ENCODE measurements at regions of chr5 and their contacts with region 1.

Region 1: GRCh38 chr5:160439205-160439600 is 17.5 kb downstream of the PTTG1 start:
- DNase-seq: peak; percentile 94
- H3K4me3 Mint-ChIP-seq: peak overlapping the region; percentile 84
- H3K27ac Mint-ChIP-seq: peak overlapping the region; percentile 94
- H3K4me1 Mint-ChIP-seq: peaks cover 17% of the 10 kb centered on the region
- H3K27me3 Mint-ChIP-seq: peaks cover 2% of the 10 kb centered on the region

Region 2: GRCh38 chr5:160293901-160294561 is 145.2 kb before region 1 on chr5:
- CTCF ChIA-PET with region 1: no interaction called
- intact Hi-C with region 1: no loop called
- DNase-seq: no peak
- H3K4me3 Mint-ChIP-seq: no peak overlapping the region
- H3K27ac Mint-ChIP-seq: no peak overlapping the region
- H3K4me1 Mint-ChIP-seq: no peaks in the 10 kb centered on the region
- H3K27me3 Mint-ChIP-seq: no peaks in the 10 kb centered on the region

Region 3: DNA sequence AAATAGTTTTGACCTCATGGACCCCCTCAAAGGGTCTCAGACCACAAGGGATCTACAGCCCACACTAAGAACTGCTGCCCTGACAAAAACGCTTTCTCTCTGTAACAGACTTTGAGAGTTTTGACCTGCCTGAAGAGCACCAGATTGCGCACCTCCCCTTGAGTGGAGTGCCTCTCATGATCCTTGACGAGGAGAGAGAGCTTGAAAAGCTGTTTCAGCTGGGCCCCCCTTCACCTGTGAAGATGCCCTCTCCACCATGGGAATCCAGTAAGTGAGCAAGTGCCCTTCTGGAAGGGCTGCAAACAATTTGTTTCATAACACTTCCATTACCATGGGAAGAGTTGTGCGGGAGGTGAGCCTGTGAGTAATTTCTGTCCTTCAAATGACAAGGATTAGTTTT is 11.6 kb before region 1 on chr5:
- CTCF ChIA-PET with region 1: interaction called, 61 read pairs
- intact Hi-C with region 1: no loop called
- DNase-seq: no peak
- H3K4me3 Mint-ChIP-seq: no peak overlapping the region
- H3K27ac Mint-ChIP-seq: no peak overlapping the region
- H3K4me1 Mint-ChIP-seq: peaks cover 23% of the 10 kb centered on the region
- H3K27me3 Mint-ChIP-seq: no peaks in the 10 kb centered on the region

Region 4: DNA sequence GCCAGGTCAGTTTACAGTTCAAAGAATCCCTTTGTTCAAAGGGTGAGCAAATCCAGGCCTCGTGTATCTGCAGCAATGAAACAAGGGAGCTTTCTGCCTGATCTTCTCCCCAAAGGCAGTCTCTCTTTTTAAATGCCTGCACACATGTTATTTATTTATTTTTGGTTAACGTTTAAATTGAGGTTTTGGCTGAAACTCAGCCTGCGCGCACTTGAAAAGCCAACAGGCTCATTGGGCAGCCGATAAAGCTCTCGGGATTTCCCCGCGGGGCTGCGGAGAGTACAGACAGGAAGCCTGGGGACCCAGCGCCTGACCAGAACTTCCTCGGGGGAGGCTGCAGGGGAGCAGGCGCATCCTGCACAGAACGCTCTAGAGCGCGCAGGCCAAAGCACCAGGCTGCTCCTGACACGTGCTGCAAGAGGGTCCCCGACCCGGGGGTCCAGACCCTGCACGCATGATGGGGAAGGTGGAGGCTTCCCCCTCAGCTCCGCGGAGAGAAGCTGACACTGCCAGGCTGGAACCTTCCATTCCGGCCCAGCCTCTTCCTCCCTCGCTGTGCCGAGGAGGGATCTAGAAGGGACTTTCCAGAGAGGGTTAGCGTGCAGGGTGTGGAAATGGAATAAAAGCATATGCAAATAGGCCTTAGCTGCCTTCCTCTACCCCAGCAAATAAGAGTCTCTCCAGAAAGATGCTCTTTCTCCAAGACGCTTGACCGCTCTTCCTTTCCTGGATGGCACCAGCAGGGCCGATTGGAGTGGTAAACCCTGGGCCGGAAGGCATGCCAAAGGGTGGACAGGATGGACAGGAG is 28.6 kb after region 1 on chr5:
- CTCF ChIA-PET with region 1: interaction called, 74 read pairs
- intact Hi-C with region 1: loop called (anchors 1 kb)
- DNase-seq: peak; percentile 87
- H3K4me3 Mint-ChIP-seq: peak overlapping the region; percentile 99
- H3K27ac Mint-ChIP-seq: peak overlapping the region; percentile 98
- H3K4me1 Mint-ChIP-seq: peaks cover 72% of the 10 kb centered on the region
- H3K27me3 Mint-ChIP-seq: no peaks in the 10 kb centered on the region

Region 5: GRCh38 chr5:160508780-160509361 is 69.7 kb after region 1 on chr5:
- CTCF ChIA-PET with region 1: interaction called, 125 read pairs
- intact Hi-C with region 1: loop called (anchors 1 kb)
- DNase-seq: peak; percentile 78
- H3K4me3 Mint-ChIP-seq: no peak overlapping the region
- H3K27ac Mint-ChIP-seq: no peak overlapping the region
- H3K4me1 Mint-ChIP-seq: peaks cover 30% of the 10 kb centered on the region
- H3K27me3 Mint-ChIP-seq: no peaks in the 10 kb centered on the region

Region 6: DNA sequence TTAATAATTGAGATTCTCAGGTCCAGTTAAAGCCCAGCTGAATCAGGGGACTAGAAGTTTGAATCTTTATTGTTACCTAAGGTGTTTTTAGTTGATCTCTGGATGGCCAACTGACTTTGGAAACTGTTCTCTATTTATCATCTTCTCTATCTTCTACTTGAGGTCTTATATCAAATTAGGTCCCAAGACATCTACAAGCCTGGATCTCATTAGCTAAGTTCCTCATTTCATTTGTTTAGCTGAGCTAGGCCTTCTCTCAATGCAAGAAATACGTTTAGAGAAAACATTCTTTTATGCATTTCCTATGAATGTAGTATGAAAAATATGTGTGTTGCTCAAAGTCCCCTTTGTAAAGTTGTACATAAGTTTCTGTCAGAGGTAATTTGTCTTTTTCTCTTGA is 179.1 kb after region 1 on chr5:
- CTCF ChIA-PET with region 1: no interaction called
- intact Hi-C with region 1: no loop called
- DNase-seq: no peak
- H3K4me3 Mint-ChIP-seq: no peak overlapping the region
- H3K27ac Mint-ChIP-seq: no peak overlapping the region
- H3K4me1 Mint-ChIP-seq: no peaks in the 10 kb centered on the region
- H3K27me3 Mint-ChIP-seq: peaks cover 9% of the 10 kb centered on the region

Region 7: GRCh38 chr5:160685695-160686094 is 246.5 kb after region 1 on chr5:
- CTCF ChIA-PET with region 1: no interaction called
- intact Hi-C with region 1: loop called (anchors 10 kb)
- DNase-seq: no peak
- H3K4me3 Mint-ChIP-seq: no peak overlapping the region
- H3K27ac Mint-ChIP-seq: no peak overlapping the region
- H3K4me1 Mint-ChIP-seq: no peaks in the 10 kb centered on the region
- H3K27me3 Mint-ChIP-seq: peaks cover 6% of the 10 kb centered on the region

Region 8: GRCh38 chr5:160843240-160843639 is 404.0 kb after region 1 on chr5:
- CTCF ChIA-PET with region 1: no interaction called
- intact Hi-C with region 1: loop called (anchors 10 kb)
- DNase-seq: no peak
- H3K4me3 Mint-ChIP-seq: no peak overlapping the region
- H3K27ac Mint-ChIP-seq: no peak overlapping the region
- H3K4me1 Mint-ChIP-seq: no peaks in the 10 kb centered on the region
- H3K27me3 Mint-ChIP-seq: peaks cover 2% of the 10 kb centered on the region

Region 9: GRCh38 chr5:161535762-161536161 is 1096.6 kb after region 1 on chr5:
- CTCF ChIA-PET with region 1: no interaction called
- intact Hi-C with region 1: loop called (anchors 5 kb)
- DNase-seq: no peak
- H3K4me3 Mint-ChIP-seq: no peak overlapping the region
- H3K27ac Mint-ChIP-seq: no peak overlapping the region
- H3K4me1 Mint-ChIP-seq: no peaks in the 10 kb centered on the region
- H3K27me3 Mint-ChIP-seq: no peaks in the 10 kb centered on the region

Measured in activated naive CD4-positive, alpha-beta T cell treated with anti-CD3 and anti-CD28 coated beads for 36 hours (primary cell).